ENCODE measurements at regions of chr17 and their contacts with region 1.

Region 1: DNA sequence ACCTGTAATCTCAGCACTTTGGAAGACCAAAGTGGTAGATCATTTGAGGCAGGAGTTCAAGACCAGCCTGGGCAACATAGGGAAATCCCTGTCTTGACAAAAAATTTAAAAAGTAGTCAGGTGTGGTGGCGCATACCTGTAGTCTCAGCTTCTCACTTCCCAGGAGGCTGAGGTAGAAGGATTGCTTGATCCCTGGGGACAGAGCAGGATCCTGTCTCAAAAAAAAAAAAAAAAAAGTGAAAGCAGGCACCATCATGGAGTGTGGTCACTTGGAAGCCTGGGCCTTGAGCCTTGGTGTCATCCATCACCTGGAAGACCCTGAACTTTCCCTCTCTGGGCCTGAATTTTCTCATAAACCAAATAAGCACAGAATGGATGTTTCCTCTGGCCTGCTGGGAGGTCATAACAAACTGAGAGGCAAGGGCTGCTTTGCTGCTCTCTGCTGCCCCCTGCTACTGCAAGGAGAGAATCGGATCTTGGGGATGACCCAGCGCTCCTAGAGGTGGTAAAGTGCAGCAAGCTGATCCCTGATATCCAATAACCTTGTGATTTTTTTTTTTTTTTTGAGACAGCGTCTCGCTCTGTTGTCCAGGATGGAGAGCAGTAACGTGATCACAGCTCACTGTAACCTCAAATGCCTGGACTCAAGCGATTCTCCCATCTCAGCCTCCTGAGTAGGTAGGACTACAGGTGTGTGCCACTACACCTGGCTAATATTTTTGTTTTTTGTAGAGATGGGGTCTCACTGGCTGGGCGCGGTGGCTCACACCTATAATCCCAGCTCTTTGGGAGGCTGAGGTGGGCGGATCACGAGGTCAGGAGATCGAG is 75.9 kb upstream of the RNU2-1 start:
- DNase-seq: peak in 1 of 2 experiments; percentile 58
- ATAC-seq: no peak
- H3K4me3 ChIP-seq: no peak overlapping the region
- H3K27ac ChIP-seq: no peak overlapping the region; a peak in 1 of 6 replicates
- H3K4me1 ChIP-seq: no peaks in the 10 kb centered on the region; the same call in 1 of the 3 replicates
- CTCF ChIP-seq: no peak
- EP300 ChIP-seq: no peak
- POLR2A ChIP-seq: no peak
- RAD21 ChIP-seq: no peak

Region 2: GRCh38 chr17:43170766-43171585 is 138.7 kb before region 1 on chr17 and contains the start of gene NBR1:
- CTCF ChIA-PET with region 1: interaction called, 13 read pairs
- POLR2A ChIA-PET with region 1: interaction called, 48 read pairs
- DNase-seq: peak; percentile 99 to 100
- ATAC-seq: peak; percentile 86 to 90
- H3K4me3 ChIP-seq: peak within 1 kb of the TSS; percentile 74
- H3K27ac ChIP-seq: peak within 1 kb of the TSS; percentile 86 to 90
- H3K4me1 ChIP-seq: peaks cover 43% of the 10 kb centered on the region
- CTCF ChIP-seq: no peak; the same call in 2 of the 3 replicates
- EP300 ChIP-seq: no peak
- POLR2A ChIP-seq: peak; percentile 2; the same call in 1 of the 2 replicates
- RAD21 ChIP-seq: no peak
- polyA plus RNA-seq, gene NBR1: 86.8 and 103 TPM in 2 replicates

Region 3: DNA sequence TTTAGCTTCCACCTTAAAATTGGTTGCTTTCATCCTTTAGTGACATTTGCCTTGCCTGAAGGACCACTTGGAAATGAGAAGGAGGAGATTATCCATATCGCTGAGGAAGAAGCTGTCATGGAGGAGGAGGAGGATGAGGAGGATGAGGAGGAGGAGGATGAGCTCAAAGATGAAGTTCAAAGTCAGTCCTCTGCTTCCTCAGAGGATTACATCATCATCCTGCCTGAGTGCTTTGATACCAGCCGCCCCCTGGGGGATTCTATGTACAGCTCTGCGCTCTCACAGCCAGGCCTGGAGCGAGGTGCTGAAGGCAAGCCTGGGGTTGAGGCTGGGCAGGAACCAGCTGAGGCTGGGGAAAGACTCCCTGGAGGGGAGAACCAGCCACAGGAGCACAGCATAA is 109.6 kb before region 1 on chr17:
- CTCF ChIA-PET with region 1: interaction called, 10 read pairs
- POLR2A ChIA-PET with region 1: no interaction called
- DNase-seq: no peak
- ATAC-seq: peak in 1 of 2 experiments; percentile 59; a peak in 3 of 6 replicates
- H3K4me3 ChIP-seq: no peak overlapping the region
- H3K27ac ChIP-seq: no peak overlapping the region
- H3K4me1 ChIP-seq: no peaks in the 10 kb centered on the region
- CTCF ChIP-seq: no peak
- EP300 ChIP-seq: no peak
- POLR2A ChIP-seq: no peak
- RAD21 ChIP-seq: no peak

Region 4: DNA sequence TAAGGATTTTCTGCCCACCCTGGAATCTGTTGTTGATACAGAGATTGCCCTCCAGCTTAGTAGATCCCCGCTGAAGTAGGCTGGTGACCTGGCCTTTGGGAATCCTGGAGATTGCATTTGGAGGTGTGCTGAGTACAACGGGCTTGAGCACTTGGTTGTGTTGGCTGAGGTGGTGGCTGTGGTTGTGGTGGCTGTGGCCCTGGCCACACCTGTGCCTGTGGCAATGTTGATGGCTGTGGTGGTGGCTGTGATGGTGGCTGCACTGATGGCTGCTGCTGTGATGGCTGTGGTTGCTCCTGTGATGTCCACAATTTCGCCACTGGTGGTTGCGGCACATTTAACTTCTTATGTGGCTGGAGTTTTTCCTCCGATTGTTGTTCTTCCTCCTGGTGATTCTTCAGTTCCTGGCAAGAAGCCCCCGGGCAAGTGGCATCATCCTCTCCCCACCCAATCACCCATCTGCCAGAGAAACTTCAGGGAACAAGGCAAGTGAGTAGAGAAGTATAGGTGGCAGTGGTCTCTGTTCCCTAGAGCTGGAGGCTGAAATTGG is 85.5 kb before region 1 on chr17:
- CTCF ChIA-PET with region 1: interaction called, 13 read pairs
- POLR2A ChIA-PET with region 1: interaction called, 4 read pairs
- DNase-seq: no peak
- ATAC-seq: no peak
- H3K4me3 ChIP-seq: no peak overlapping the region
- H3K27ac ChIP-seq: no peak overlapping the region
- H3K4me1 ChIP-seq: no peaks in the 10 kb centered on the region
- CTCF ChIP-seq: no peak
- EP300 ChIP-seq: no peak
- POLR2A ChIP-seq: no peak
- RAD21 ChIP-seq: no peak

Region 5: DNA sequence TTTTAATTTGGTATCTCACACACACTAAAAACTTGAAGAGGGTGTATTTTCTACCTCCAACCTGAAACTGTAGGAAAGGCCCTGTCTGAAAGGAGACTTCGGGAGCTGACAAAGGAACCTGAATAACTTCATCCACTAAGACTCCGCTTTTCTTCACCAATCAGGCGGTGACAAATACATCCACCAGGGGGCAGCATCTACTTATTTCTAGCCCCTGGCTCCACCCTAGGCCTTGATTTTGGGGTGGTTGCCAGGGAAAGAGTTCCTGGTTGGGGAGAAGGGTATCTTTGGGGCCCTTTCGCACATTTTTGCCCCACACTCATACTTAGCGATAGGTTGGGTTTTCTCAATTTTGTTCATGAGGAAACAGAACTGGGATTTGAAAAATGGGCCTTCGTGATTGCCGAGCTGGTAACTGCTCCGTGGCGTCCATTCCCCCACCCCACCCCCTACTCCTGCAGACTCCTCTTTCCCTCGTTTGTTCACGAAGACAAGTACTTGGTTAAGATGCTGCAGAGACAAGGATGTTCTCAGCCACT is 84.3 kb after region 1 on chr17:
- CTCF ChIA-PET with region 1: no interaction called
- POLR2A ChIA-PET with region 1: no interaction called
- DNase-seq: peak; percentile 91
- ATAC-seq: peak; percentile 51 to 72
- H3K4me3 ChIP-seq: no peak overlapping the region
- H3K27ac ChIP-seq: peak overlapping the region; percentile 53 to 69
- H3K4me1 ChIP-seq: peaks cover 13% of the 10 kb centered on the region
- CTCF ChIP-seq: peak; percentile 99
- EP300 ChIP-seq: no peak
- POLR2A ChIP-seq: no peak
- RAD21 ChIP-seq: peak; percentile 100

Measured in A549 (cell line).